A549 (cell line): ENCODE measurements at regions of chr12 and their contacts with region 1.

Region 1: DNA sequence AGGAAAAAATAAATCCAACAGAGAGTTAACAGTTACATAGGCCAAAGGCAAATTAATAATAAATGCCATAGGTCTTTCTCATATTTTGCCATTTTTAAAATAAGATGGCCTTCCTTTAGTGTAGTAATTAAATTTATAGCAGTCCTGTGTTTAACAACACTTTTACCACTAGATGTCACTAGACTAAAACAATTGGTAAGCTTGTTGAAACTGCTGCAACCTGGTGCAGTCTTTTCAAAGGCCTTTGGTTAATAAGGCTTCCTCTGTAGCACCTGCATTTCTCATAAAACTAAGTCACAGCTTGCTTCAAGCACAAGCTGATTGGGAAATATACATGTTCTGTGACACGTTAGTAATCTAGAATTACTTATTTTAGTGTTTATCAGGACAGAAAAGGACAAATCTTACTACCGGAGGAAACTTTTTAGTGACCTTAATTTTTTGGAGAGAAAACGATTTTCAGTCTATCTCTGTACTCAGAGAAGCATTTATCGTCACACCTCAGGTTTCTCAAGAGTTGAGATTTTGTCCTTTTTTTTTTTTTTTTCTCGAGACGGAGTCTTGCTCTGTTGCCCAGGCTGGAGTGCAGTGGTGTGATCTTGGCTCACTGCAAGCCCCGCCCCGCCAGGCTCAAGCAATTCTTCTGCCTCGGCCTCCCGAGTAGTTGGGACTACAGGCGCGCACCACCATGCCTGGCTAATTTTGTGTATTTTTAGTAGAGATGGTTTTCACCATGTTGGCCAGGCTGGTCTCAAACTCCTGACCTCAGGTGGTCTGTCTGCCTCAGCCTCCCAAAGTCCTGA is 20.0 kb downstream of the BORCS5 start:
- DNase-seq: peak; percentile 75 to 87
- ATAC-seq: peak; percentile 92 to 95
- H3K4me3 ChIP-seq: no peak overlapping the region
- H3K27ac ChIP-seq: peak overlapping the region; percentile 19 to 66
- H3K4me1 ChIP-seq: peaks cover 14% of the 10 kb centered on the region; the same call in 1 of the 3 replicates
- CTCF ChIP-seq: peak; percentile 92
- EP300 ChIP-seq: no peak
- POLR2A ChIP-seq: no peak
- RAD21 ChIP-seq: peak; percentile 98 to 99

Region 2: GRCh38 chr12:12365931-12366431 is 10.9 kb before region 1 on chr12:
- CTCF ChIA-PET with region 1: interaction called, 11 read pairs
- POLR2A ChIA-PET with region 1: no interaction called
- DNase-seq: no peak
- ATAC-seq: no peak
- H3K4me3 ChIP-seq: no peak overlapping the region
- H3K27ac ChIP-seq: peak overlapping the region; percentile 35 to 41; a peak in 4 of 6 replicates
- H3K4me1 ChIP-seq: peaks cover 10% of the 10 kb centered on the region
- CTCF ChIP-seq: no peak
- EP300 ChIP-seq: no peak
- POLR2A ChIP-seq: no peak
- RAD21 ChIP-seq: no peak

Region 3: DNA sequence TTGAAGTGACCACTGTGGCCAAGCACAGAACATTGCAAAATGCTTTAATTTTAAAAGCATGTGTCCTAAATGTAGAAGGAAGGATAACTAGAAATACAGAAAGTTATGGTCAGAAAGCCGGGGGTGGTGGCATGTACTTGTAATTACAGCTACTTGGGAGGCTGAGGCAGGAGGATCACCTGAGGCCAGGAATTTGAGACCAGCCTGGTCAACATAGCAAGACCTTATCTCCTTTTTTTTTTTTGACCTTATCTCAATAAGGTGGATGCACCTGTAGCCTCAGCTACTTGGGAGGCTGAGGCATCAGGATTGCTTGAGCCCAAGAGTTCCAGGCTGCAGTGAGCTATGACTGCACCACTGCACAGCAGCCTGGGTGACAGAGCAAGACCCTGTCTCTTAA is 13.5 kb after region 1 on chr12:
- CTCF ChIA-PET with region 1: interaction called, 33 read pairs
- POLR2A ChIA-PET with region 1: no interaction called
- DNase-seq: no peak
- ATAC-seq: no peak
- H3K4me3 ChIP-seq: no peak overlapping the region
- H3K27ac ChIP-seq: no peak overlapping the region
- H3K4me1 ChIP-seq: peaks cover 14% of the 10 kb centered on the region
- CTCF ChIP-seq: no peak
- EP300 ChIP-seq: no peak
- POLR2A ChIP-seq: no peak
- RAD21 ChIP-seq: no peak

Region 4: GRCh38 chr12:12562585-12563261 is 185.9 kb after region 1 on chr12 and contains the start of gene DUSP16:
- CTCF ChIA-PET with region 1: interaction called, 38 read pairs
- POLR2A ChIA-PET with region 1: interaction called, 5 read pairs
- DNase-seq: peak; percentile 88 to 95
- ATAC-seq: peak; percentile 86 to 93
- H3K4me3 ChIP-seq: peak within 1 kb of the TSS; percentile 93
- H3K27ac ChIP-seq: peak within 1 kb of the TSS; percentile 98
- H3K4me1 ChIP-seq: peaks cover 37% of the 10 kb centered on the region
- CTCF ChIP-seq: peak; percentile 10; the same call in 1 of the 3 replicates
- EP300 ChIP-seq: peak; percentile 16 to 63; a peak in 2 of 5 replicates
- POLR2A ChIP-seq: peak; percentile 44; the same call in 1 of the 2 replicates
- RAD21 ChIP-seq: peak in 1 of 2 experiments; percentile 39; a peak in 2 of 5 replicates
- polyA plus RNA-seq, gene DUSP16: 34.7 and 43.0 TPM in 2 replicates

Region 5: DNA sequence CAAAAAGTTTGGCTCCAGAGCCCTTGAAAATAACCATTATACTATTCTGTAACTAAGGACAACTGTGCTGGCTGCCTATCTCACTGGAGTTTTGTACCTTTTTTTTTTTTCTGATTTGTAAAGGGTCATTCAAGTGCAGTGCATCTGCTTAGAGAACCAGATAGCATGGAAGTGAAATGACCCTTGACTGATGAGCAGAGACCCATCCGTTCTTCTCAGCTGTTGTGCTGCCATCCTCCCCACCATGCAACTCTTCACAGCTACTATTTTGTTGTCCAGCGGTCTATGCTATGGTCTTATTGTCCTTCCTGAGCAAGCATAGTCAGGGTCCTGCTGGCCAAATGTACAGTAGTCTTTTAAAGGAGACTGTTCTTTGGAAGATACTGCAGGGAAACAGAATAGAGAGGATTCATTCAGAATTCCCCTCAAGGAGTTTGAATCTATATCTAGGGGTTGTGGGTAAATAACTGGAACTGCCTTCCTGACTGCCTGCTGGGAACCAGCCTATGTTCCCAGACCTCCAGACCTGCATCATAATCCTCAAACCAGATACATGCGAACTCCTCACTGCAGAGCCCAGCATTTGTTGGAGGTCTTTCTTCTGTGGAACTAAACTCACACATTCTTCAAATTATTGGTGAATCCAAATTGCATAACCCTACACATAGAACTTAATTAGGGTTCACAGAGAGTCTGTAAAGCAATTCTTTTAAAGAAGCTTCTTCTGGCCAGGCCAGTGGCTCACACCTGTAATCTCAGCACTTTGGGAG is 278.0 kb after region 1 on chr12:
- CTCF ChIA-PET with region 1: interaction called, 49 read pairs
- POLR2A ChIA-PET with region 1: no interaction called
- DNase-seq: no peak
- ATAC-seq: no peak
- H3K4me3 ChIP-seq: no peak overlapping the region
- H3K27ac ChIP-seq: no peak overlapping the region
- H3K4me1 ChIP-seq: peaks cover 4% of the 10 kb centered on the region; the same call in 2 of the 3 replicates
- CTCF ChIP-seq: no peak
- EP300 ChIP-seq: no peak
- POLR2A ChIP-seq: no peak
- RAD21 ChIP-seq: no peak

Region 6: GRCh38 chr12:12661086-12661485 is 284.2 kb after region 1 on chr12:
- CTCF ChIA-PET with region 1: interaction called, 49 read pairs
- POLR2A ChIA-PET with region 1: no interaction called
- DNase-seq: no peak
- ATAC-seq: no peak
- H3K4me3 ChIP-seq: no peak overlapping the region
- H3K27ac ChIP-seq: no peak overlapping the region
- H3K4me1 ChIP-seq: peaks cover 17% of the 10 kb centered on the region
- CTCF ChIP-seq: no peak
- EP300 ChIP-seq: no peak
- POLR2A ChIP-seq: no peak
- RAD21 ChIP-seq: no peak

Region 7: GRCh38 chr12:12704593-12705230 is 327.9 kb after region 1 on chr12:
- CTCF ChIA-PET with region 1: interaction called, 26 read pairs
- POLR2A ChIA-PET with region 1: no interaction called
- DNase-seq: peak; percentile 87 to 94
- ATAC-seq: peak; percentile 99 to 100
- H3K4me3 ChIP-seq: no peak overlapping the region
- H3K27ac ChIP-seq: peak overlapping the region; percentile 45 to 77
- H3K4me1 ChIP-seq: peaks cover 14% of the 10 kb centered on the region
- CTCF ChIP-seq: peak; percentile 100
- EP300 ChIP-seq: no peak
- POLR2A ChIP-seq: no peak
- RAD21 ChIP-seq: peak; percentile 100